ENCODE measurements at regions of chr1 and their contacts with region 1.

Region 1: DNA sequence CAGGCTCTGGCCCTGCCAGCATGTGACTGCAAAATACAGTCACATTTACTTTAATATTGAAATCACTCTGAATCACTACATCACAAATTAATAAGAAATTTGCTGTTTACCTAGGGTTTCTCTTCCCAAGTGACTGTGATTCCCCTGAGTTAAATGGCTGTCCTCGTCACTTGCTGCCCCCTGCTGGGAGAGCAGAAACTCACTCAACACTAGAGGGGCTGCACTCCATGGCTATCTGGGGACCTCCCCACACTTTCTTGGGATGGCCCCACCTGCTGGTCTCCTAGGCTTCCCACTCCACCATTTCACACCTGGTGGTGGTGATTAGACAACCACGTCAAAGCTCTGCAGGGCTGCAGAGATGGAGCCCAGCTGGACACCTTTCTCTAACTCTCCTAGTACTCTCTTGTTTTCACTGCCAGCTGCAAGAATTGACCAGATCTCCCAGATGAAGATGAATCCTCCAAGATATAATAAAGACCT is 63.4 kb downstream of the CD2 start:
- DNase-seq: peak; percentile 76
- ATAC-seq: peak; percentile 100
- H3K4me3 ChIP-seq: no peak overlapping the region
- H3K27ac ChIP-seq: no peak overlapping the region
- H3K4me1 ChIP-seq: no peaks in the 10 kb centered on the region
- H3K27me3 ChIP-seq: no peaks in the 10 kb centered on the region
- CTCF ChIP-seq: peak; percentile 77
- EP300 ChIP-seq: no peak
- POLR2A ChIP-seq: no peak
- RAD21 ChIP-seq: peak; percentile 79

Region 2: DNA sequence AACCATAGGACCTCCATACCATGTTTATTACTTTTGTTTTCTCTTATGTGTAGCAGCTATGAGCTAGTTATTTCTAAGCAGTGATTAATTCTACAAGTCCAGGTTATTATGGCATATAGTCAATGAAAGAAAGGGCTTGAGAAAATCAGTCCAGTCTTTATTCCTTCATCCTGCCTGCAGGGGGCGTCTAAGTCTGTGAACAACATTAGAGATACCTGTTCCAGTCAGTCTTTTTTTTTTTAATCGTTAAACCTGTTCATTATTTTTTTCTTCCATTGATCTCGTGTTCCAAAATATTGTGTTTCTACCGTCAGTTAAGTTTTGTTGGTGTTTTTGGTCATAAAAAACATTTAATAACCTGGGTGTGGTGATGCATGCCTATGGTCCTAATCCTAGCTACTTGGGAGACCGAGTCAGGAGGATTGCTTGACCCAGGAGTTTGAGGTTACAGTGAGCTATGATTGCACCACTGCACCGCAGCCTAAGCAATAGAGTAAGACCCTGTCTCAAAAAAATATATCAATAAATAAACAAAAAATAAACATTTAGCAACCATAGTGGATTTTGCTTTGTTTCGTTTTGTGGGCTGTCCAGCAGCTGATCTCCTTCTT is 92.8 kb before region 1 on chr1:
- CTCF ChIA-PET with region 1: interaction called, 3 read pairs
- POLR2A ChIA-PET with region 1: no interaction called
- in situ Hi-C with region 1: loop called (anchors 10 kb)
- intact Hi-C with region 1: loop called (anchors 1 kb)
- DNase-seq: peak; percentile 51
- ATAC-seq: peak; percentile 58; the same call in 2 of the 3 replicates
- H3K4me3 ChIP-seq: no peak overlapping the region
- H3K27ac ChIP-seq: no peak overlapping the region
- H3K4me1 ChIP-seq: no peaks in the 10 kb centered on the region
- H3K27me3 ChIP-seq: no peaks in the 10 kb centered on the region
- CTCF ChIP-seq: peak; percentile 64
- EP300 ChIP-seq: no peak
- POLR2A ChIP-seq: no peak
- RAD21 ChIP-seq: no peak

Region 3: GRCh38 chr1:116737020-116737854 is 80.4 kb before region 1 on chr1:
- CTCF ChIA-PET with region 1: interaction called, 28 read pairs
- POLR2A ChIA-PET with region 1: no interaction called
- in situ Hi-C with region 1: loop called (anchors 10 kb)
- intact Hi-C with region 1: loop called (anchors 2 kb)
- DNase-seq: peak; percentile 7
- ATAC-seq: peak; percentile 69
- H3K4me3 ChIP-seq: no peak overlapping the region
- H3K27ac ChIP-seq: no peak overlapping the region
- H3K4me1 ChIP-seq: no peaks in the 10 kb centered on the region
- H3K27me3 ChIP-seq: no peaks in the 10 kb centered on the region
- CTCF ChIP-seq: peak; percentile 79
- EP300 ChIP-seq: no peak
- POLR2A ChIP-seq: no peak
- RAD21 ChIP-seq: peak; percentile 67

Region 4: GRCh38 chr1:116806245-116806644 is 11.4 kb before region 1 on chr1:
- CTCF ChIA-PET with region 1: no interaction called
- POLR2A ChIA-PET with region 1: no interaction called
- in situ Hi-C with region 1: no loop called
- intact Hi-C with region 1: no loop called
- DNase-seq: no peak
- ATAC-seq: no peak
- H3K4me3 ChIP-seq: no peak overlapping the region
- H3K27ac ChIP-seq: no peak overlapping the region
- H3K4me1 ChIP-seq: no peaks in the 10 kb centered on the region
- H3K27me3 ChIP-seq: 0 out of 5 replicates have a peak, but pooled peaks cover 0 to 5% of the 10 kb centered on the region in 2 experiments
- CTCF ChIP-seq: no peak
- EP300 ChIP-seq: no peak
- POLR2A ChIP-seq: no peak
- RAD21 ChIP-seq: no peak

Region 5: DNA sequence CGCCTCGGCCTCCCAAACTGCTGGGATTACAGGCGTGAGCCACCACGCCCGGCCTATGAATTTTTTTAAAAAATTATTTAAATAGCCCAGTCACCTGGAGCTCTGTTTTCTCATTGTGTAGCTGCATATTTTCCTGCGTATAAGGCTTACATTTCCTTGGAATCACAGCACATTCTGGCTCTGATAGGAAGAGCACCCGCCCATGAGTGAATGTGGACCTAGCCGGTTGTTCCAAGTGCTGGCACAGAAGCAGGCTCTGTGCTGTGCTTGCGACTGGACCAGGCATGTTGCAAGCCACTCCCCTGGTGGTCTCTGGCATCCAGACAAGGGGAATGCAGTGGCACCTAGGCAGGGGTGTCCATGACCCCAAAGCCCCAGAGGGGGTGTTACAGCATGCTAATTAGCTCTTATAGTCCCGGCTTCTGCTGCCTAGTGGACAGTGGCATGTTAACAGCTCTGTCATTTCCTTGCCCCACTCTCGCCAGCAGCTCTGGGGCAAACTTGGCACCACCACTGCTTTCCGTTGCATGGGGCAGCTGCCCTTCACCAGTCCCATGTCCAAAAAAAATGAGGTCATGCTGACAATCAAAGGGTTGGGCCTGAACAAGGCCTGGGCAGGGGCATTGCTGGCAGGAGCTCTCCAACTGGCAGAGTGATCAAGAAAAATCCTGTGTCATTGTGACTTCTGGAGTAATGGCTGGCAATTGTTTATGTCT is 398.3 kb after region 1 on chr1:
- CTCF ChIA-PET with region 1: no interaction called
- POLR2A ChIA-PET with region 1: no interaction called
- in situ Hi-C with region 1: no loop called
- intact Hi-C with region 1: no loop called
- DNase-seq: no peak
- ATAC-seq: no peak
- H3K4me3 ChIP-seq: no peak overlapping the region
- H3K27ac ChIP-seq: no peak overlapping the region
- H3K4me1 ChIP-seq: no peaks in the 10 kb centered on the region
- H3K27me3 ChIP-seq: no peaks in the 10 kb centered on the region
- CTCF ChIP-seq: no peak
- EP300 ChIP-seq: no peak
- POLR2A ChIP-seq: no peak
- RAD21 ChIP-seq: no peak